Psoas muscle (tissue), 8 donors: ENCODE measurements at regions of chr2 and their contacts with region 1.

Region 1: DNA sequence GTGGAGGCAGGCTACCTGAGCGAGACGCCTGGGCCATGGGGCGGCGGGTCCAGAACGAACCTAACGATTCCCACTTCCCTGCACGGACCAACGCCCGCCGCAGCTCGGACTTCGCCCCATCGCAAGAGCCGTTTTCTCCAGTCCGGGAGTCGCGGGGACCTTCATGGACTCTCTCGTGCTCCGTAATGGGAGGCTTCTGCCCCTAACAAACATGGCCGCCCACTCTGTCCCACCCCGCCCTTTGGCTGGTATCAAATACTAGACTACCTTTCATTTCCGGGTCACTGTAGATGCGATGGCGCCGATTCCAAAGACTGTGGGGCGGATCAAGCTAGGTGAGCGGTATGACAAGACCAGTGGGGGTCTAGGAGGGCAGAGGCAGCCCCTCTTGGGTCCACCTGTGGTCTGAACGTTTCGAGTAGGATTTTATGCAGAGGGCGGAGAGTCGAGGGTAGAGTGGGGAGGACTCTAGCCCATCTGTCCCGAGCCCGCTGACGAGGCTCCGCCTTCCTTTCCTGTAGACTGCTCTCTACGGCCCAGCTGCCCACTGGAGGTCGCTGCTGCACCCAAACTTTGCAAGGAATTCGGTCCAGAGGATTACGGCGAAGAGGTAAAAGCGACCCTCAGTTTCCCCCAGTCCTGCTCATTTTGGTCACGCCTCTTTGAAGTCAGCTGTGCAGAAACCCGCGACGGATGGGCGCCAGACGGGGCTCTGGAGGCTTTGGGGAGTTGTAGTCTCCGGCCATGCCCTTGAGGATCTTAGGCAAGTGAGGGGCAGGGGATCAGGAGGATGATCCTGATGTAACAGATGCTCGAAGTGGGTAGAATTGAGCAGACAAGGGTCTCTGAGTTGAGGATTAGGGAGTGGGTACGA is at the starts of genes CCDC142 and TTC31:
- DNase-seq: peak; percentile 95 to 97
- ATAC-seq: peak; percentile 98 to 99 (median 99)
- H3K4me3 ChIP-seq: peak within 1 kb of the TSS; percentile 98
- H3K27ac ChIP-seq: peak within 1 kb of the TSS; percentile 91
- H3K4me1 ChIP-seq: peaks cover 22% of the 10 kb centered on the region
- H3K27me3 ChIP-seq: no peaks in the 10 kb centered on the region
- CTCF ChIP-seq: peak; percentile 79
- total RNA-seq, gene CCDC142: 2.7 to 8.3 (median 4.5) TPM
- total RNA-seq, gene TTC31: 5.4 to 10.1 (median 8.4) TPM

Region 2: DNA sequence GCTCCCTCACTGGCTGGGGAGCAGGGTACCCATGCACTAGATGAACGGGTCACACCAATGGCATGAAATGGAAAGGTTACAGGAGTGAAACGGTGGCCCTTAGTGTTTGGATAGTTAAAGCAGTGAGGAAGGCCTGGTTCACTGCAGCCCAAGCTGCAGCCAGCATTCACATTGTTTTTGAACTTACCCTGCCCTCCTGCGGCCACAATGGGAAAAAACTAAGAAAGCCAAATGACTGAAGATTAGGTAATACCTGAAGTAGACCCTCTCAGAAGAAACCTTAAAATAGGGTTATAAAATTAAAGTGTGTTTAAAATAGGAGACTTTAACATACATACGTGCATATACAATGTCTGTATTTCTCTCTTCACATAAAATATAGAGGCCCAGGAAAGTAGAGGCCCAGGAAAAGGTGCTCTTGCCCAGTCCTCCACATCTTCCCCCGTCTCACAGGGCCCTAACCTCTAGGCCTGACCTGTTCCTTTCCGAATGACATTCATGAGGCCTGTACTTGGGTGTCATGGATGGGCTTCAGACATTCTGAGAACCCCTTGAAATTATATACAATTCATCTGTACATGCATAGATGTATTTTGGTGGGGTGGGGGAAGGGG is 104.7 kb after region 1 on chr2:
- intact Hi-C with region 1: loop called (anchors 1 to 5 kb)
- DNase-seq: peak; percentile 53 to 68
- ATAC-seq: peak; percentile 56 to 86 (median 79)
- H3K4me3 ChIP-seq: no peak overlapping the region
- H3K27ac ChIP-seq: no peak overlapping the region
- H3K4me1 ChIP-seq: no peaks in the 10 kb centered on the region
- H3K27me3 ChIP-seq: peaks cover 0 to 2% (median 1%) of the 10 kb centered on the region in 3 donors
- CTCF ChIP-seq: peak; percentile 67

Region 3: GRCh38 chr2:74602586-74603281 is 119.7 kb after region 1 on chr2:
- intact Hi-C with region 1: no loop called
- DNase-seq: no peak
- ATAC-seq: no peak
- H3K4me3 ChIP-seq: no peak overlapping the region
- H3K27ac ChIP-seq: no peak overlapping the region
- H3K4me1 ChIP-seq: no peaks in the 10 kb centered on the region
- H3K27me3 ChIP-seq: peaks cover 0 to 17% (median 2%) of the 10 kb centered on the region in 3 donors
- CTCF ChIP-seq: no peak